K562 (cell line): ENCODE measurements at regions of chr6 and their contacts with region 1.

Region 1: GRCh38 chr6:34459899-34460593 is 5.8 kb upstream of the PACSIN1 start:
- DNase-seq: peak; percentile 74 to 82 (median 76)
- ATAC-seq: peak; percentile 79
- H3K4me3 ChIP-seq: no peak overlapping the region
- H3K27ac ChIP-seq: no peak overlapping the region
- H3K4me1 ChIP-seq: peaks cover 10 to 16% of the 10 kb centered on the region in 2 experiments; a peak in 4 of 5 replicates
- H3K27me3 ChIP-seq: no peaks in the 10 kb centered on the region
- CTCF ChIP-seq: peak; percentile 85 to 94 (median 85)
- EP300 ChIP-seq: no peak
- POLR2A ChIP-seq: no peak
- RAD21 ChIP-seq: peak; percentile 94 to 97

Region 2: DNA sequence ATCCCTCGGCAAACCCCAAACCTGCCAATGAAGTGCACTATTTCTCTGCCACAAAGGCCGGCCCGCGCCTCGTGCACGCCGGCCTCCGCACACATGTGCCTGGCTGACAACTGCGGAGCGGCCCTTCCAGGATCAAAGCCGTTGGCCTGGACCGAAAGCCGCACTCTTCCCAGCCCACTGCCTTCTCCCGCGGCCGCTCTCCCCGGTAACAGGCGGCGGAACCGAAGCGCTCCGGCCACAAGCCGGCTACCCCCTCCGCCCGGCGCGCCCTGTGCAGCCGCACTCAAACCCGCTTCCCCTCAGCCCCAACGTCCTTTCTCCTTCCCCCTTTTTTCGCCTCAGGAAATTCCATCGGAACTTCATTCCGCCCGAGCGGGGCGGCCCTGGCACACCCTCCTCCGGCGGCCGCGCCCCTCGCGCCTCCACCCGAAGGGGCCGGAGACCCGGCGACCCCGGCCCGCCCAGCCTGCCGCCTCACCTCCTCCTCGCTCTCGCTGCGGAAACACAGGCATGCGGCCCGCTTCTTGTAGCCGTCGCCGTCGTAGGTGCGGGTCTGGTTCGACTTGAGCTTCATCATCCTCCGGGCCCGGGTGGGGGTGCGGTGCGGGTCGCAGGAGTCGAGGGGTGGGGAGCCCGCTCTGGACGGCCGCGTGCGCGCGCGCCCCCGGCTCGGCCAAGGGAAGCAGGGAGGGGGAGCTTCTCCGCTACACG is 68.1 kb before region 1 on chr6:
- CTCF ChIA-PET with region 1: no interaction called
- POLR2A ChIA-PET with region 1: no interaction called
- in situ Hi-C with region 1: no loop called
- intact Hi-C with region 1: no loop called
- DNase-seq: peak; percentile 83 to 92 (median 88)
- ATAC-seq: peak; percentile 70
- H3K4me3 ChIP-seq: peak overlapping the region; percentile 91
- H3K27ac ChIP-seq: peak overlapping the region; percentile 96
- H3K4me1 ChIP-seq: peaks cover 18 to 19% of the 10 kb centered on the region in 2 experiments; a peak in 4 of 5 replicates
- H3K27me3 ChIP-seq: no peaks in the 10 kb centered on the region
- CTCF ChIP-seq: no peak
- EP300 ChIP-seq: no peak
- POLR2A ChIP-seq: peak; percentile 78
- RAD21 ChIP-seq: no peak

Region 3: GRCh38 chr6:34602318-34603111 is 142.5 kb after region 1 on chr6:
- CTCF ChIA-PET with region 1: no interaction called
- POLR2A ChIA-PET with region 1: no interaction called
- in situ Hi-C with region 1: loop called (anchors 5 kb)
- intact Hi-C with region 1: no loop called
- DNase-seq: no peak
- ATAC-seq: no peak
- H3K4me3 ChIP-seq: no peak overlapping the region
- H3K27ac ChIP-seq: no peak overlapping the region
- H3K4me1 ChIP-seq: 0 out of 5 replicates have a peak, but pooled peaks cover 0 to 8% of the 10 kb centered on the region in 2 experiments
- H3K27me3 ChIP-seq: no peaks in the 10 kb centered on the region
- CTCF ChIP-seq: no peak
- EP300 ChIP-seq: no peak
- POLR2A ChIP-seq: no peak
- RAD21 ChIP-seq: no peak